ENCODE measurements at regions of chr11 and their contacts with region 1.

Region 1: GRCh38 chr11:3854977-3855807 is at the start of gene STIM1:
- DNase-seq: peak; percentile 96
- ATAC-seq: peak; percentile 74
- H3K4me3 Mint-ChIP-seq: peak within 1 kb of the TSS; percentile 96
- H3K27ac Mint-ChIP-seq: peak within 1 kb of the TSS; percentile 99
- H3K4me1 Mint-ChIP-seq: peaks cover 63% of the 10 kb centered on the region
- H3K27me3 Mint-ChIP-seq: no peaks in the 10 kb centered on the region
- CTCF ChIP-seq: peak; percentile 58
- total RNA-seq, gene STIM1: 37.3 and 38.4 TPM in 2 replicates

Region 2: GRCh38 chr11:3834664-3835461 is 20.3 kb before region 1 on chr11:
- CTCF ChIA-PET with region 1: interaction called, 156 read pairs
- POLR2A ChIA-PET with region 1: interaction called, 352 read pairs
- intact Hi-C with region 1: no loop called
- DNase-seq: no peak
- ATAC-seq: no peak
- H3K4me3 Mint-ChIP-seq: peak overlapping the region; percentile 65
- H3K27ac Mint-ChIP-seq: peak overlapping the region; percentile 76
- H3K4me1 Mint-ChIP-seq: peaks cover 93% of the 10 kb centered on the region
- H3K27me3 Mint-ChIP-seq: no peaks in the 10 kb centered on the region
- CTCF ChIP-seq: no peak

Region 3: GRCh38 chr11:3880724-3881123 is 25.5 kb after region 1 on chr11:
- CTCF ChIA-PET with region 1: interaction called, 22 read pairs
- POLR2A ChIA-PET with region 1: interaction called, 43 read pairs
- intact Hi-C with region 1: loop called (anchors 1 kb)
- DNase-seq: no peak
- ATAC-seq: peak; percentile 80
- H3K4me3 Mint-ChIP-seq: peak overlapping the region; percentile 60
- H3K27ac Mint-ChIP-seq: peak overlapping the region; percentile 87
- H3K4me1 Mint-ChIP-seq: peaks cover 85% of the 10 kb centered on the region
- H3K27me3 Mint-ChIP-seq: no peaks in the 10 kb centered on the region
- CTCF ChIP-seq: no peak

Region 4: GRCh38 chr11:3929649-3930048 is 74.5 kb after region 1 on chr11:
- CTCF ChIA-PET with region 1: interaction called, 28 read pairs
- POLR2A ChIA-PET with region 1: interaction called, 29 read pairs
- intact Hi-C with region 1: loop called (anchors 1 kb)
- DNase-seq: no peak
- ATAC-seq: no peak
- H3K4me3 Mint-ChIP-seq: no peak overlapping the region
- H3K27ac Mint-ChIP-seq: no peak overlapping the region
- H3K4me1 Mint-ChIP-seq: peaks cover 55% of the 10 kb centered on the region
- H3K27me3 Mint-ChIP-seq: no peaks in the 10 kb centered on the region
- CTCF ChIP-seq: no peak

Region 5: DNA sequence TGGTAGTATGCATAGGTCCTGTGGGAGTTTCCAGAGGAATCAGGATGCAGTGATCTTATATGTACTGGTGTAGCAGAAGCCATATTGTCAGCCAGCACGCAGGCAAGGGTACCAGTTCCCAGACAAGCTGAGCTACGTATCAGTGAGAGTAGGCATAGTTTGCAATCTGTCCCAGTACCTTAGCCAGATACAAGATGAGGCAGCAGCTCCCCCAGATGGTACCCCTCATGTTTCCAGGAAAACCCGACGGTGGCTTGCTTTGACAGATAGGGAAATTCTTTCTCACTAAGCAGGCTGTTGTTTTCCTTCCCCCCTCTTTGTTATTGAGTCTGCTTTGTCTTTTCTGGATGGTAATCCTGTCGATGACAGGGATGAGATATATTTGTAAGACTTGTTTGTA is 129.7 kb after region 1 on chr11:
- CTCF ChIA-PET with region 1: interaction called, 33 read pairs
- POLR2A ChIA-PET with region 1: interaction called, 15 read pairs
- intact Hi-C with region 1: loop called (anchors 2 kb)
- DNase-seq: no peak
- ATAC-seq: peak; percentile 73
- H3K4me3 Mint-ChIP-seq: no peak overlapping the region
- H3K27ac Mint-ChIP-seq: no peak overlapping the region
- H3K4me1 Mint-ChIP-seq: peaks cover 38% of the 10 kb centered on the region
- H3K27me3 Mint-ChIP-seq: no peaks in the 10 kb centered on the region
- CTCF ChIP-seq: no peak

Region 6: DNA sequence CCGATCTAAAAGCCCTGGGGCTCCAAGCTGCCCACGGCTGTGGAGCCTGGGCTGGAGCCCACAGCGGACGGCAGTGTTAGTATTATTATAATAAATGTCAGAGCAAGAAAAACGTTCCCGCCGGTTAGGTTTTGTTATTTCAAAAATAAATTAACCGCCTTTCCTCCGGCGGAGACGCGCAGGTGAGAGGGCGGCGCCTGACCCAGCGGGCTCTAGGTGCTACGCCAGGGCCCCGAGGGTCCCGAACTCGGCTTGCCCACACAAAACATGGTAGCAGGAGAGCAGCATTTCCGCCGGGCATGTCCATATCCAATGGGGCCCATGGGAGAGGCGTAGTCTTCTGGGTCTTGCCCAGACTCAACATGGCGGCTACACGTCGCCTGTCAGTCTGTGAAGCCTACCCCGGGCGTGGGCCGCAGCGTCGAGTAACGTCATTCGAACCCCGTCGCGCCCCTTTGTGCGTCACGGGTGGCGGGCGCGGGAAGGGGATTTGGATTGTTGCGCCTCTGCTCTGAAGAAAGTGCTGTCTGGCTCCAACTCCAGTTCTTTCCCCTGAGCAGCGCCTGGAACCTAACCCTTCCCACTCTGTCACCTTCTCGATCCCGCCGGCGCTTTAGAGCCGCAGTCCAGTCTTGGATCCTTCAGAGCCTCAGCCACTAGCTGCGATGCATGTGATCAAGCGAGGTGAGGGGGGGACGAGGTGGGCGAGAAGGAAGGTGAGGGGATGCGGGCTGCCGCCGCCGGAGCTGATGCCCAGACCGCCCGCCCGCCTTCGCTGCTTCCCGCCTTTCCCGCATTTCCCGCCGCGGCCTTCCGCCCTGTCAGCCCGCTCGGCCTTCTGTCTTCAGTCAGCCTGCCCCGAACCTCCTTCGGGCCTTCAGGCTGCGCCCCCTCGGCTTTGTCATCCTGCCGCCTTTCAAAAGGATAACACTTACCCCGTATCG is 239.4 kb after region 1 on chr11 and contains the start of gene RRM1:
- CTCF ChIA-PET with region 1: no interaction called
- POLR2A ChIA-PET with region 1: interaction called, 4 read pairs
- intact Hi-C with region 1: loop called (anchors 1 kb)
- DNase-seq: peak; percentile 89
- ATAC-seq: peak; percentile 98
- H3K4me3 Mint-ChIP-seq: peak within 1 kb of the TSS; percentile 96
- H3K27ac Mint-ChIP-seq: peak within 1 kb of the TSS; percentile 95
- H3K4me1 Mint-ChIP-seq: peaks cover 36% of the 10 kb centered on the region
- H3K27me3 Mint-ChIP-seq: no peaks in the 10 kb centered on the region
- CTCF ChIP-seq: no peak
- total RNA-seq, gene RRM1: 34.6 and 39.6 TPM in 2 replicates

Measured in activated B cell treated with CpG ODN at 0.5 μM for 24 hours (primary cell).